ENCODE measurements at regions of chr3 and their contacts with region 1.

Region 1: GRCh38 chr3:44761424-44762169 is at the starts of genes KIAA1143 and KIF15:
- DNase-seq: peak; percentile 98
- H3K4me3 ChIP-seq: peak within 1 kb of the TSS; percentile 68 to 79 (median 75)
- H3K27ac ChIP-seq: peak within 1 kb of the TSS; percentile 62 to 77 (median 76)
- H3K4me1 ChIP-seq: peaks cover 0 to 19% (median 14%) of the 10 kb centered on the region in 4 donors
- H3K27me3 ChIP-seq: no peaks in the 10 kb centered on the region
- CTCF ChIP-seq: no peak
- EP300 ChIP-seq: peak in 1 of 4 donors; percentile 53
- POLR2A ChIP-seq: peak in 1 of 2 donors; percentile 34
- total RNA-seq, gene KIAA1143: 26.7 to 35.3 (median 30.8) TPM
- total RNA-seq, gene KIF15: 0.66 to 3.0 (median 1.1) TPM

Region 2: DNA sequence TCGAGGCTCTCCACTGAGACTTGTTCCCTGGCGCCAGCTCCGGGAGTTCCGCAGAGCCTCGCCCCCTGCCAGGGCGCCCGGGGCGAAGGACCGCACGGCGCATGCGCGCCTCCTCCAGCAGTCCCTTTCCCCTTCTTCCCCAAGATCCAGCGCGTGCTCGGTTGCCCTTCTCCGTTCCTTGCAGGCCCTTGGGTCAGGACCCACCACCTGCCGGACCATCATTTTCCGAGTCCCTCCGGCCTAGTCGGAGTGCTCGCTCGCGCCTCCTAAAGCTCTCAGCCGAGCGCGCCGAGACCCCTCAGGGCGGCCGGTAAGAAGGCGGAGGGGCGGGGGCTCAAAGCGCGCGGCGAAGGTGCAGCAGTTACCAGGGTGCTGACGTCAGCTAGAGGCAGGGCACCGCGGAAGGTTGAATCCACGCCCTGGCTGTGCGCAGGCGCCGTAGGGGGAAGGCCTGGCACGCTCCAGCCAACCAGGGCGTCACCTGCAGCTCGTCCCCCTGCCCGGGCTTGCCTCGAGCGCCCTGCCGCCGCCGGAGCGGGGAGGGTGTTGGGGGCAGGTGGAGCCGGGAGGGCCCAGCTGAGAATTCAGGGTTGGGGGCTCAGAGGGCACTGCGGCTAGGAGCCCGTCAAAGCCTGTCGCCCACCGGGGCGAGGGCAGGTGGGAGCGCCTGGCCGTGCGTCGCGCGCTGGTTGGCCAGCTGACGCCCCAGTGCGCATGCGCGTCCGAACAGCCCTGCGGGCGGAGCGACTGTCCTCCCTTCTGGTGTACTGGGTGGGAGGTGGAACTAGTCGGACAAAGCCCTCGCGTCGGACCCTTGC is 423.4 kb before region 1 on chr3 and contains the start of gene TCAIM:
- intact Hi-C with region 1: loop called (anchors 5 kb)
- DNase-seq: peak; percentile 99
- H3K4me3 ChIP-seq: peak within 1 kb of the TSS; percentile 61 to 78 (median 69)
- H3K27ac ChIP-seq: peak within 1 kb of the TSS; percentile 90 to 97 (median 96)
- H3K4me1 ChIP-seq: peaks cover 0 to 47% (median 30%) of the 10 kb centered on the region in 4 donors
- H3K27me3 ChIP-seq: no peaks in the 10 kb centered on the region
- CTCF ChIP-seq: no peak
- EP300 ChIP-seq: peak in 1 of 4 donors; percentile 6
- POLR2A ChIP-seq: peak; percentile 94 to 95
- total RNA-seq, gene TCAIM: 30.3 to 39.3 (median 33.8) TPM

Region 3: GRCh38 chr3:44712455-44713075 is 49.0 kb before region 1 on chr3 and contains the start of gene ZNF502:
- intact Hi-C with region 1: loop called (anchors 1 kb)
- DNase-seq: peak; percentile 93
- H3K4me3 ChIP-seq: peak within 1 kb of the TSS; percentile 71 to 92 (median 87)
- H3K27ac ChIP-seq: peak within 1 kb of the TSS; percentile 75 to 82 (median 80)
- H3K4me1 ChIP-seq: peaks cover 0 to 12% (median 9%) of the 10 kb centered on the region in 4 donors
- H3K27me3 ChIP-seq: peaks cover 0 to 4% (median 0%) of the 10 kb centered on the region in 3 donors
- CTCF ChIP-seq: peak in 3 of 4 experiments; percentile 18 to 53 (median 43)
- EP300 ChIP-seq: no peak
- POLR2A ChIP-seq: peak; percentile 24 to 41
- total RNA-seq, gene ZNF502: 5.8 to 8.9 (median 7.7) TPM

Region 4: DNA sequence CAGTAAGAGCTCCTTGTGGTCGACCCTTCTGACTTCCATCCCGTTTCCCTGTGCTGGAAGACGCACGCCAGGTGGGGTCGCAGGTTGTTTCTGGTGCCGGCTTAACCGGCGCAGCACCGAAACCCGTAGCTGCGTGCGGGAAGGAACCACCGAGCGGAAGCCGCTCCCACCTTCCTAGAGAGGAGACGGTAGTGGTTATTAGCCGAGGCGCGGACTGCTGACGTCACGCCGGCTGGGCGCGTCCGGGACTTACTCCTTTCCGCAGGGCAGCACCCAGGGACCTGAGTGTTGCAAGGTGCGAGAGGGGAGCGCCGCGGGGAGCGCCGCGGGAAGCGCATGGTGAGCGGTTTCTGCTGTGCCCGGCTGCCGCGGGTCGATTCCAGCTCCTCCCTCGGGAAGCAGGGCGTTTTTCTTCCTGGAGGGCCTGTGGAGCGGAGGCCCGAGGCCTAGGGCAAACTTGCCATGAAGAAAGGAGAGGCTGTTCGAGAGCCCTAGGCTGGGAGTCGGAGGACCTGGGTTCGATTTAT is 32.1 kb before region 1 on chr3 and contains the start of gene ZNF501:
- intact Hi-C with region 1: loop called (anchors 1 kb)
- DNase-seq: peak; percentile 97
- H3K4me3 ChIP-seq: peak within 1 kb of the TSS; percentile 53 to 85 (median 70)
- H3K27ac ChIP-seq: peak within 1 kb of the TSS; percentile 52 to 73 (median 64)
- H3K4me1 ChIP-seq: peaks cover 0 to 15% (median 9%) of the 10 kb centered on the region in 4 donors
- H3K27me3 ChIP-seq: no peaks in the 10 kb centered on the region
- CTCF ChIP-seq: no peak
- EP300 ChIP-seq: no peak
- POLR2A ChIP-seq: peak in 1 of 2 donors; percentile 32
- total RNA-seq, gene ZNF501: 5.8 to 14.7 (median 10.4) TPM

Region 5: GRCh38 chr3:44861412-44862220 is 100.0 kb after region 1 on chr3 and contains the start of gene TMEM42:
- intact Hi-C with region 1: loop called (anchors 1 kb)
- DNase-seq: peak; percentile 95
- H3K4me3 ChIP-seq: peak within 1 kb of the TSS; percentile 62 to 80 (median 71)
- H3K27ac ChIP-seq: peak within 1 kb of the TSS; percentile 93 to 96 (median 94)
- H3K4me1 ChIP-seq: peaks cover 0 to 13% (median 8%) of the 10 kb centered on the region in 4 donors
- H3K27me3 ChIP-seq: no peaks in the 10 kb centered on the region
- CTCF ChIP-seq: no peak
- EP300 ChIP-seq: no peak
- POLR2A ChIP-seq: peak; percentile 61 to 62
- total RNA-seq, gene TMEM42: 8.3 to 25.7 (median 10.4) TPM

Region 6: GRCh38 chr3:44976002-44976815 is 214.6 kb after region 1 on chr3 and contains the starts of genes EXOSC7 and ZDHHC3:
- intact Hi-C with region 1: loop called (anchors 2 kb)
- DNase-seq: peak; percentile 93
- H3K4me3 ChIP-seq: peak within 1 kb of the TSS; percentile 76 to 98 (median 98)
- H3K27ac ChIP-seq: peak within 1 kb of the TSS; percentile 85 to 95 (median 94)
- H3K4me1 ChIP-seq: peaks cover 0 to 48% (median 30%) of the 10 kb centered on the region in 4 donors
- H3K27me3 ChIP-seq: no peaks in the 10 kb centered on the region
- CTCF ChIP-seq: no peak
- EP300 ChIP-seq: no peak
- POLR2A ChIP-seq: peak; percentile 18 to 44
- total RNA-seq, gene EXOSC7: 26.9 to 44.3 (median 34.9) TPM
- total RNA-seq, gene ZDHHC3: 43.2 to 62.9 (median 46.3) TPM